Mammary epithelial cell (primary cell): ENCODE measurements at regions of chr18 and their contacts with region 1.

Region 1: GRCh38 chr18:45839414-45840395 is 14.2 kb downstream of the SIGLEC15 start:
- DNase-seq: peak; percentile 62
- H3K4me3 ChIP-seq: no peak overlapping the region
- H3K27ac ChIP-seq: no peak overlapping the region
- H3K4me1 ChIP-seq: peaks cover 12% of the 10 kb centered on the region
- H3K27me3 ChIP-seq: no peaks in the 10 kb centered on the region
- CTCF ChIP-seq: peak; percentile 75 to 78

Region 2: GRCh38 chr18:45576931-45577330 is 262.8 kb before region 1 on chr18:
- CTCF ChIA-PET with region 1: no interaction called
- dilution Hi-C with region 1: no loop called
- in situ Hi-C with region 1: no loop called
- intact Hi-C with region 1: no loop called
- DNase-seq: no peak
- H3K4me3 ChIP-seq: no peak overlapping the region
- H3K27ac ChIP-seq: no peak overlapping the region
- H3K4me1 ChIP-seq: no peaks in the 10 kb centered on the region
- H3K27me3 ChIP-seq: no peaks in the 10 kb centered on the region
- CTCF ChIP-seq: no peak

Region 3: DNA sequence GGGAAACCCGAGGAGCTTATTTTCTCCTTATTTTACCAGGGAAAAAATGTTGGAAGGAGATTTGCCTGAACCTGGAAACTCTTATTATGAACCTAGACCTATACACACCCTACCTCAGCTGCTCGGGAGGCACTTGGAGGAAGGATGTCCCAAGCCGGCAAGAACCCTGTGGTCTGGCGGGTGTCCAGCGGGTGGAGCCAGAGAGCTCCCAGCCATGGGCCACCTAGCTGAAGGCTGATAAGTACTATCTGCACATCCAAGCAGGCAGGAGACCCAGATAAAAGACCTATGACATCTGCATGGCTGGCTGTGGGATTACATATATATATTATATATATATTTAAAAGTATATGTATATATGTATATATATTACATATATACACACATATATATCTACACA is 116.8 kb before region 1 on chr18:
- CTCF ChIA-PET with region 1: interaction called, 5 read pairs
- dilution Hi-C with region 1: no loop called
- in situ Hi-C with region 1: loop called in 1 of 2 experiments (anchors 10 kb)
- intact Hi-C with region 1: loop called (anchors 1 kb)
- DNase-seq: peak; percentile 57
- H3K4me3 ChIP-seq: no peak overlapping the region
- H3K27ac ChIP-seq: no peak overlapping the region
- H3K4me1 ChIP-seq: peaks cover 3% of the 10 kb centered on the region
- H3K27me3 ChIP-seq: no peaks in the 10 kb centered on the region
- CTCF ChIP-seq: peak; percentile 81 to 94

Region 4: GRCh38 chr18:45775241-45775676 is 64.4 kb before region 1 on chr18:
- CTCF ChIA-PET with region 1: no interaction called
- dilution Hi-C with region 1: no loop called
- in situ Hi-C with region 1: no loop called
- intact Hi-C with region 1: loop called (anchors 2 kb)
- DNase-seq: no peak
- H3K4me3 ChIP-seq: peak overlapping the region in 1 of 3 experiments; percentile 35
- H3K27ac ChIP-seq: peak overlapping the region; percentile 68
- H3K4me1 ChIP-seq: peaks cover 35% of the 10 kb centered on the region
- H3K27me3 ChIP-seq: no peaks in the 10 kb centered on the region
- CTCF ChIP-seq: no peak

Region 5: GRCh38 chr18:45802608-45803492 is 36.9 kb before region 1 on chr18:
- CTCF ChIA-PET with region 1: no interaction called
- dilution Hi-C with region 1: no loop called
- in situ Hi-C with region 1: no loop called
- intact Hi-C with region 1: loop called (anchors 1 kb)
- DNase-seq: peak; percentile 96
- H3K4me3 ChIP-seq: no peak overlapping the region
- H3K27ac ChIP-seq: peak overlapping the region; percentile 91
- H3K4me1 ChIP-seq: peaks cover 44% of the 10 kb centered on the region
- H3K27me3 ChIP-seq: no peaks in the 10 kb centered on the region
- CTCF ChIP-seq: no peak

Region 6: DNA sequence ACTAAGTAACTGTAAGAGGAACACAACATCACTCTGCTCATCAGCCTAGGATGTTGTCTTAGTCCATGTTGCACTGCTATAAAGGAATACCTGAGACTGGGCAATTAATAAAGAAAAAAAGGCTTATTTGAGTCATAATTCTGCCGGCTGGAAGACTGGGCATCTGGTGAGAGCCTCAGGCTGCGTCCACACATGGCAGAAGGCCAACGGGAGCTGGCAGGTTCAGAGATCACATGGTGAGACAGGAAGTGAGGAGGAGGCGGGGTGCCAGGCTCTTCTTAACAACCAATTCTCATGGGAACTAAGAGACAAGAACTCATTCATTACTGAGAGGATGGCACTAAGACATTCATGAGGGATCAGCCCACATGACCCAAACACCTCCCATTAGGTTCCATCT is 80.7 kb after region 1 on chr18:
- CTCF ChIA-PET with region 1: no interaction called
- dilution Hi-C with region 1: loop called (anchors 5 kb)
- in situ Hi-C with region 1: no loop called
- intact Hi-C with region 1: no loop called
- DNase-seq: peak; percentile 89
- H3K4me3 ChIP-seq: no peak overlapping the region
- H3K27ac ChIP-seq: peak overlapping the region; percentile 31
- H3K4me1 ChIP-seq: peaks cover 14% of the 10 kb centered on the region
- H3K27me3 ChIP-seq: no peaks in the 10 kb centered on the region
- CTCF ChIP-seq: no peak

Region 7: GRCh38 chr18:46207985-46208384 is 368.3 kb after region 1 on chr18:
- CTCF ChIA-PET with region 1: no interaction called
- dilution Hi-C with region 1: no loop called
- in situ Hi-C with region 1: no loop called
- intact Hi-C with region 1: no loop called
- DNase-seq: no peak
- H3K4me3 ChIP-seq: no peak overlapping the region
- H3K27ac ChIP-seq: no peak overlapping the region
- H3K4me1 ChIP-seq: peaks cover 16% of the 10 kb centered on the region
- H3K27me3 ChIP-seq: no peaks in the 10 kb centered on the region
- CTCF ChIP-seq: no peak